ENCODE measurements at regions of chr2 and their contacts with region 1.

Region 1: DNA sequence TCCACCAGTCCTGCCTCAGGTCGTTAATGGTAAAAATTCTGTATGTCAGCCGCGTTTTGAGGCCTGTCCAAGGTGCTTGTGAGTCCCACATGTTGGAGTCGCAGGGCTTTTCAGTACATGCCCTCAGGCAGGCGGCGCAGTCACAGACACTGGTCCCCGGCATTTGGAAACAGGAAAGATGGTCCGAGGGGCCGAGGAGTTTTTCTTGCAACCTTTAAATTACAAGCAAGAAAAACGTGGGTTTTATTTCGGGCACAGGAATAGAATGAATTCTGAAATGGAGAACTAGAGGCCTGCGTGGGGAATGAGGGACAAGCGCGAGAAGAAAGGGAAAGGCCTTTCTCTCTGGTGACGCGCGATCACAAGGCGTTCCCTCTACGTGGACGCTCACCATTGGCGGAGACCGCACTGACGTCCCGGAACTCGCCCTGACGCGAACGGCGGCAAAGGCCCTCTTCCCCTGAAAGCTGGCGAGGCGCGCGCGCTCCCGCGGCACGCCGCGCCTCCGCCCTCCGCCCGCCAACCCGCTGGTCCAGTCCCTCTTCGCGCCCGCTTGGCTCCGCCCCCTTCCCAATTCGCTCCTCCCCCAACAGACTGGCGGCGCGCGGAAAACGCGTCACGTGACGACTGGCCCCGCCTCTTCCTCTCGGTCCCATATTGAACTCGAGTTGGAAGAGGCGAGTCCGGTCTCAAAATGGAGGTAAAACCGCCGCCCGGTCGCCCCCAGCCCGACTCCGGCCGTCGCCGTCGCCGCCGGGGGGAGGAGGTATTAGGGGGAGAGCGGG is at the start of gene HNRNPA3:
- DNase-seq: peak; percentile 100
- H3K4me3 ChIP-seq: peak within 1 kb of the TSS; percentile 99 to 100 (median 100)
- H3K27ac ChIP-seq: peak within 1 kb of the TSS; percentile 100
- H3K4me1 ChIP-seq: peaks cover 33% of the 10 kb centered on the region
- H3K27me3 ChIP-seq: no peaks in the 10 kb centered on the region
- CTCF ChIP-seq: peak in 1 of 2 donors; percentile 2
- POLR2A ChIP-seq: peak; percentile 97
- total RNA-seq, gene HNRNPA3: 316 and 322 TPM in 2 replicates

Region 2: GRCh38 chr2:177172034-177172880 is 40.0 kb before region 1 on chr2:
- CTCF ChIA-PET with region 1: no interaction called
- POLR2A ChIA-PET with region 1: no interaction called
- dilution Hi-C with region 1: no loop called
- intact Hi-C with region 1: loop called (anchors 1 kb)
- DNase-seq: peak; percentile 52
- H3K4me3 ChIP-seq: no peak overlapping the region
- H3K27ac ChIP-seq: peak overlapping the region; percentile 79
- H3K4me1 ChIP-seq: peaks cover 44% of the 10 kb centered on the region
- H3K27me3 ChIP-seq: no peaks in the 10 kb centered on the region
- CTCF ChIP-seq: no peak
- POLR2A ChIP-seq: no peak

Region 3: GRCh38 chr2:177239932-177240630 is 27.8 kb after region 1 on chr2:
- CTCF ChIA-PET with region 1: no interaction called
- POLR2A ChIA-PET with region 1: no interaction called
- dilution Hi-C with region 1: no loop called
- intact Hi-C with region 1: loop called (anchors 1 kb)
- DNase-seq: peak; percentile 75
- H3K4me3 ChIP-seq: peak overlapping the region in 1 of 3 experiments; percentile 0
- H3K27ac ChIP-seq: peak overlapping the region; percentile 99
- H3K4me1 ChIP-seq: peaks cover 56% of the 10 kb centered on the region
- H3K27me3 ChIP-seq: no peaks in the 10 kb centered on the region
- CTCF ChIP-seq: no peak
- POLR2A ChIP-seq: no peak

Region 4: DNA sequence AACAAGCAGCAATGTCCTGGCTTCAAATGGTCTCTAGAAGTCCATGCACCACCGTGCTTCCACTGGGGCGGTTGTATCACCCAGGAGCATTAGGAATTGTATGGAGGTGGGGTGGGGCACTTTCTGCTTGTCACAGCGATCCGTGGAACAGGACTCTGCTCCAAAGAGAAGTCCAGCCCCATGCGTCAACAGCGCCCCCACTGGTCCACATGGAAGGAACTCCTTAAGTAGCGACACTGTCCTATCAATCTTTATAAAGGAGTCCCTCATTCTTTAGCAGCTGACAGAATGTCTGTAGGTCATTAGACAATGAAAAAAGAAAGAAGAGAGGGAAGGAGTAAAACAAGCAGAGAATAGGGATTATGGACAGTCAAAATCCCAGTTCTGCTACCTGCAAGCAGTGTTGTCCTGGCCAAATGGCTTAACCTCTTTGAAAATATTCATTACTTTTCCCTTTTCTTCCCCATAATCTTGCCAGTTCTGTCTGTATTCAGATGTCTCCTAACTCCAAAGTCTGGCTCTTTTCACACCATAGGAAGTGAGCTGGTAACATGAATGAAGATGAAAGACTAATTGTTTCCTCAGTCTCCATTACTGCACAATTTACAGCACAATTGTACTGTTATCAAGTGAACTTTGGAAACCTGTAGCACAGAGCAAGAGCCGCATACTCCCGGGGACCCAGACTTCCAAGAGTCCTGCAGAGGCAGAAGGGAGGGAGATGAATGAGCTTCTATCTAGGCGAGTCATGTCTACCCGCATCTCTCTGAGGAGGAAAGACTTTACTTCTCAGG is 42.3 kb after region 1 on chr2:
- CTCF ChIA-PET with region 1: interaction called, 7 read pairs
- POLR2A ChIA-PET with region 1: no interaction called
- dilution Hi-C with region 1: no loop called
- intact Hi-C with region 1: loop called (anchors 1 kb)
- DNase-seq: peak; percentile 64
- H3K4me3 ChIP-seq: no peak overlapping the region
- H3K27ac ChIP-seq: peak overlapping the region; percentile 19
- H3K4me1 ChIP-seq: peaks cover 55% of the 10 kb centered on the region
- H3K27me3 ChIP-seq: no peaks in the 10 kb centered on the region
- CTCF ChIP-seq: peak; percentile 65 to 68
- POLR2A ChIP-seq: no peak

Region 5: GRCh38 chr2:177314194-177314593 is 101.9 kb after region 1 on chr2:
- CTCF ChIA-PET with region 1: no interaction called
- POLR2A ChIA-PET with region 1: no interaction called
- dilution Hi-C with region 1: no loop called
- intact Hi-C with region 1: no loop called
- DNase-seq: no peak
- H3K4me3 ChIP-seq: no peak overlapping the region
- H3K27ac ChIP-seq: no peak overlapping the region
- H3K4me1 ChIP-seq: no peaks in the 10 kb centered on the region
- H3K27me3 ChIP-seq: no peaks in the 10 kb centered on the region
- CTCF ChIP-seq: no peak
- POLR2A ChIP-seq: no peak

Region 6: GRCh38 chr2:177419274-177419673 is 207.0 kb after region 1 on chr2:
- CTCF ChIA-PET with region 1: no interaction called
- POLR2A ChIA-PET with region 1: no interaction called
- dilution Hi-C with region 1: no loop called
- intact Hi-C with region 1: loop called (anchors 5 kb)
- DNase-seq: no peak
- H3K4me3 ChIP-seq: no peak overlapping the region
- H3K27ac ChIP-seq: no peak overlapping the region
- H3K4me1 ChIP-seq: peaks cover 26% of the 10 kb centered on the region
- H3K27me3 ChIP-seq: no peaks in the 10 kb centered on the region
- CTCF ChIP-seq: no peak
- POLR2A ChIP-seq: no peak

Measured in endothelial cell of umbilical vein (primary cell).